MCF 10A (cell line): ENCODE measurements at regions of chr5 and their contacts with region 1.

Region 1: DNA sequence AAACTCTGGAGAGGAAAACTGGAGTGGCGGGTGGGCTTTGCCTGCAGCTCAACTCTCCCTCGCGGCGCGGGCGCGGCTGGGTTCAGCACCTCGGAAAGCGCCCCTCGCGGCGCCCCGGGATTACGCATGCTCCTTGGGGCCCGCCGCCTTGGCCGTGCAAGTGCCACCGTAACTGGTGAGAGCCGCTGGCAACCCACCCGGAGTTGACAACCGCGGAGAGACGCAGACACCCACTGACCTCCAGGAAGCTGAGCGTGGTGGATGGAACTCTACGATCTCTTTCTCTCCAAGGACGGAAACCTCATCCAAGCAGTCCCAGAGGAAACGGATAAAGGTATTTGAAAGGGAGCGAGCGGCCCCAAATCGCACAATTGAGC is 194 bp upstream of the RXFP3 start:
- DNase-seq: no peak
- H3K4me3 Mint-ChIP-seq: no peak overlapping the region
- H3K27ac Mint-ChIP-seq: no peak overlapping the region
- H3K4me1 Mint-ChIP-seq: peaks cover 7% of the 10 kb centered on the region
- H3K27me3 Mint-ChIP-seq: peaks cover 40% of the 10 kb centered on the region
- CTCF ChIP-seq: no peak

Region 2: DNA sequence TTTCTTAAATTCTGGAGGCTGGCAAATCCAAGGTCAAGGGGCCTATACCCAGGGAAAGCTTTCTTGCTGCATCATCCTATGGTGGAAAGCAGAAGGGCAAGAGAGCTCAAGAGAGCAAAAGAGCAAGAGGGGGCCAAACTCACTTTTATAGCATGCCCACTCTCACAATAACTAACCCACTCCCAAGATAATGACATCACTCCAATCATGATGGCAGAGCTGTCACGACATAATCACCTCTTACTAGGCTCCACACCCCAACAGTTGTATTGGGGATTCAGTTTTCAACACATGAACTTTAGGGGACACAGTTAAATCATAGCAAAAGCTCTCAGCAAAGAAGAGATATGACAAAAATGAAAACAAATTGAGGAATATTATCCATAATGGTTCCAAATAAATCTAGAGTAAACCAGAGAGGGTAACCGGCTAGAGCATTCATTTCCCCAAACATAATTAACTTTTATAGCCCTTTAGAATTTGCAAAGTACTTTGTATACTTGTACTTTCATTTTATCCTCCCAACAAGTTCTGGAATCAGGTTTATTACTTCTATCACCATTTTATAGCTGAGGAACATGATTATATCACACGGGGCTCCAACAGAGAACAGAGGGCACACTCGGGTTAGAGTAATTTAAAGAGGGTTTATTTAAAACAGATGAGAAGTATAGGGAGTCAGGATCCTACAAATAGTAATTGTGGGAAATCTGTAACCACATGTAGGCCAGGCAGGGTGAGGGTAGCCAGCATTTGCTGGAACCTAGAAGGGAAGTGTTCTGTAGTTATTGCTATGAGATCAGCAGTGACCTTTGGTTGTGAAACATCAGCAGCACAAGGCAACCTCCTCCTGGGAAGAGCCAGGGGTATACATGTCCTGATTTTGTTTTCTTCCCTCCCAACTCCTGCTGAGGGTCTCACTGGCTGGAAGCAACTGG is 502.4 kb before region 1 on chr5:
- CTCF ChIA-PET with region 1: interaction called, 72 read pairs
- POLR2A ChIA-PET with region 1: interaction called, 6 read pairs
- intact Hi-C with region 1: loop called (anchors 1 kb)
- DNase-seq: no peak
- H3K4me3 Mint-ChIP-seq: no peak overlapping the region
- H3K27ac Mint-ChIP-seq: no peak overlapping the region
- H3K4me1 Mint-ChIP-seq: peaks cover 5% of the 10 kb centered on the region
- H3K27me3 Mint-ChIP-seq: no peaks in the 10 kb centered on the region
- CTCF ChIP-seq: no peak

Region 3: DNA sequence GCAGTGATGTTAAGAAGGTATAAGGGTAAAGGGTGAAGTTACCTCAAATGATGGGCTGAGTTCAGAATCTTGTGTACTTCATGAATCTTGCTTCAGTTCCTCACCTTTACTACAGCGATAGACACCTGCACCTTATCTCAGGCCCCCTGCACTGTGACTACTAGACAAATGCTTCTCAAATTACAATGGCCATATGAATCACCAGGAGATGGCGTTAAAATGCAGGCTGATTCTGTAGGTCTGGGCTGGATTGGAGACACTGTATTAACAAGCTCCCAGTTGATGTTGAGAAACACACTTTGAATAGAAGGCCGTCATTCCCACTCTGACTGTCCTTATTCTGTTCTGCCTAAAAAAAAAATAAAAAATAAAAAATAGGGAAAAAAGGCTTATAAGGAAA is 465.4 kb before region 1 on chr5:
- CTCF ChIA-PET with region 1: interaction called, 30 read pairs
- POLR2A ChIA-PET with region 1: no interaction called
- intact Hi-C with region 1: loop called (anchors 10 kb)
- DNase-seq: peak; percentile 33
- H3K4me3 Mint-ChIP-seq: no peak overlapping the region
- H3K27ac Mint-ChIP-seq: no peak overlapping the region
- H3K4me1 Mint-ChIP-seq: no peaks in the 10 kb centered on the region
- H3K27me3 Mint-ChIP-seq: no peaks in the 10 kb centered on the region
- CTCF ChIP-seq: no peak

Region 4: DNA sequence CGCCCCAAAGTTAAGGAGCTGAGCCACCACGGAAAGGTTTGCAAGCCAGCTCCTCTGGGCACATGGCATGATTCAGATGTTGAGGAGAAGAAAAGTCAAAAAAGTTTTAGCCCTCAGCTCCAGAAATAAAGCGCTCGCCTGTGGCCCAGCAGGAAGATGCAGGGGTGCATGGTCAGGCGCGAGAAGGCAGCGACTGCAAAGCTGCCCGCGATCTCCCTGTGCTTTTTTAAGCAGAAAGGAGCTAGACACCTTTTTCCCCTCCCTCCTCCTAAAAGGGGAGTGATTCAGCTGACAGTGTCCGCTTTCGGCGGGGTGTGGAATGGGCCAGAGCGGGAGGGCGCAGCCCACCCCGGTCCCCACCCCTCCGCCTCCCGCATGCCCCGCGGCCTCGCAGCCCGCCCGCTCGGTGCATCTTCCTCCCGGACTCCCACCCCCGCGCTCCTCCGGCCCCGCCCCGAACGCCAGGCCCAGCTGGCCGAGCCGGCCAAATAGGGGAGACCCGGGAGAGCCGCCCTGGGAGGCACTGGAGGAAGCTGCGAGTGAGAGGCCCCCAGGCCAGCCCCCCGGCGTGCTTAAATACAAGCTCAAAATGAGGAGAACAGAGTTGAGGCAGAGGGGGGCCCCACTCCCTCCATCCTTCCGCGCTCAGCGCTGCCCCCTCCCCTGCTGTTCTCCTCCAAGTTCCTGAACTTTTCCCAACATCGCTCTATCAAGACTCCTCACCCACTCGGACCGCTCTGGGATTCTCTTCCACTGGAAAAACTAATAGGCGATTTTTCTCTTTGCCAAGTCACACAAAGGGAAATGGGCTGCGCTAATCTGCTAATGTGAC is 44.0 kb before region 1 on chr5 and contains the start of gene ADAMTS12:
- CTCF ChIA-PET with region 1: interaction called, 13 read pairs
- POLR2A ChIA-PET with region 1: no interaction called
- intact Hi-C with region 1: no loop called
- DNase-seq: peak; percentile 18
- H3K4me3 Mint-ChIP-seq: peak within 1 kb of the TSS; percentile 53
- H3K27ac Mint-ChIP-seq: no peak within 1 kb of the TSS
- H3K4me1 Mint-ChIP-seq: peaks cover 10% of the 10 kb centered on the region
- H3K27me3 Mint-ChIP-seq: peaks cover 42% of the 10 kb centered on the region
- CTCF ChIP-seq: no peak
- total RNA-seq, gene ADAMTS12: not detected in 2 replicates

Region 5: DNA sequence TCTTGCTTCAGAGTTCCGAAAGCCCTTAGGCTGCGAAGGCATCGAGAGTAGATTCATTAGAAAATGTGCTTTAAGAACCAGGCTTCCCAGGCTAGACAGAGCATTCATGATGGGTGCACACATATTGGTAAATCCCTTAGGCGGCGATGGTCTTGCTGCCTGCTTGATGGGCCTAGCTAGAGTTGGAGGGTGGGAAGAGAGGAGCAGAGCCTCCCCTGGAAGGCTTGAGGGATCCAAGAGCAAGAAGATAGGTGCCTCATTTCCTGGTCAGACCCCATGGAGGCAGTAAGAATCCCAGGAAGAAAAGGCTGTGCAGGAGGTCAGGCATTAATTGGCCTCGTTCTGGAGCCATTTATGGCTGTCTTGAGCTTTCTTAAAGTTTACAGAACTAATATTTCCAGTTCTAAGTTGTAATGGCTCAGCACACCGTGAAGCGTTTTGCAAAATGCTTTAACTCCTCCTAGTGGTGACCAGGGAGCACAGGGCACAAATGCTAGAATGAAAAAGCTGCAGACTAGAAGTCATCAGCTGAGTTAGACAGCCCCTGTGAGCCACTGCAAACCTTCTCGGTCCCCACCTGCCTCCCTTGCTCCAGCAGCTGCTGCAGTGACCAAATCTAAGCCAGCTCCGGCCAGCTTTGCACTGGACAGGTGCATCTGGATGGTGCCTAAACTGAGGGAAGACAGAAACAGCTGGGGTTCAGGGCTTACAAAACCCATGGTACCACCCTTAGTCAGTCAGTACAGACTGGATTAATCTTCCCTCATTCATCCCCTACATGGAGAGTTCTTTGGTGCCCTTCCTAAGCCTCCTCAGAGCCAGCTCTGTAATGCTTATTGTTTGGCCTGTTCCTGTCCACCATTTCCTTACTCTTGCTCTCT is 33.8 kb after region 1 on chr5:
- CTCF ChIA-PET with region 1: interaction called, 32 read pairs
- POLR2A ChIA-PET with region 1: no interaction called
- intact Hi-C with region 1: no loop called
- DNase-seq: peak; percentile 35
- H3K4me3 Mint-ChIP-seq: no peak overlapping the region
- H3K27ac Mint-ChIP-seq: no peak overlapping the region
- H3K4me1 Mint-ChIP-seq: no peaks in the 10 kb centered on the region
- H3K27me3 Mint-ChIP-seq: no peaks in the 10 kb centered on the region
- CTCF ChIP-seq: peak; percentile 56

Region 6: DNA sequence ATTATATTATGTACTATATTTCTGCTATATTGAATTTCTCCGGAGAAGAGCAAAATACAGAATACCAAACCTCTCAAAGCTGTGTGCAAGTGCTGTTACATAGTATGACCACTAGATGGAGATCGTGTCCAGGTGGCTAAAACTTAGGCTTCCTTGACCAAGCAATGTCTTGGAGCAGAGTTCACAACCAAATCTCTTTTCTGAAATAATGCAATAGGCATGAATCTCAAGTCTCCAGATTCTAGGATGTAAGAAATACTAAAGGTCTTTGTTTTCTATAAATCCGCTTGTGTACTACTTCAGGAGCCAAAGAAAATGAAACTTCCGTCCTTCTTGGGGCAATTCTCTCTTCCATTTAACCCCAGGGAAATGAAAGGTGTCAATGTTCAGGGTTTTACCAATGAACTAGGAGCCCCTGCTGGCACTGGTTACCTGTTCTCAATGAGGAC is 538.6 kb after region 1 on chr5:
- CTCF ChIA-PET with region 1: no interaction called
- POLR2A ChIA-PET with region 1: no interaction called
- intact Hi-C with region 1: no loop called
- DNase-seq: peak; percentile 67
- H3K4me3 Mint-ChIP-seq: no peak overlapping the region
- H3K27ac Mint-ChIP-seq: no peak overlapping the region
- H3K4me1 Mint-ChIP-seq: no peaks in the 10 kb centered on the region
- H3K27me3 Mint-ChIP-seq: peaks cover 16% of the 10 kb centered on the region
- CTCF ChIP-seq: peak; percentile 90